ENCODE measurements at regions of chr12 and their contacts with region 1.

Region 1: DNA sequence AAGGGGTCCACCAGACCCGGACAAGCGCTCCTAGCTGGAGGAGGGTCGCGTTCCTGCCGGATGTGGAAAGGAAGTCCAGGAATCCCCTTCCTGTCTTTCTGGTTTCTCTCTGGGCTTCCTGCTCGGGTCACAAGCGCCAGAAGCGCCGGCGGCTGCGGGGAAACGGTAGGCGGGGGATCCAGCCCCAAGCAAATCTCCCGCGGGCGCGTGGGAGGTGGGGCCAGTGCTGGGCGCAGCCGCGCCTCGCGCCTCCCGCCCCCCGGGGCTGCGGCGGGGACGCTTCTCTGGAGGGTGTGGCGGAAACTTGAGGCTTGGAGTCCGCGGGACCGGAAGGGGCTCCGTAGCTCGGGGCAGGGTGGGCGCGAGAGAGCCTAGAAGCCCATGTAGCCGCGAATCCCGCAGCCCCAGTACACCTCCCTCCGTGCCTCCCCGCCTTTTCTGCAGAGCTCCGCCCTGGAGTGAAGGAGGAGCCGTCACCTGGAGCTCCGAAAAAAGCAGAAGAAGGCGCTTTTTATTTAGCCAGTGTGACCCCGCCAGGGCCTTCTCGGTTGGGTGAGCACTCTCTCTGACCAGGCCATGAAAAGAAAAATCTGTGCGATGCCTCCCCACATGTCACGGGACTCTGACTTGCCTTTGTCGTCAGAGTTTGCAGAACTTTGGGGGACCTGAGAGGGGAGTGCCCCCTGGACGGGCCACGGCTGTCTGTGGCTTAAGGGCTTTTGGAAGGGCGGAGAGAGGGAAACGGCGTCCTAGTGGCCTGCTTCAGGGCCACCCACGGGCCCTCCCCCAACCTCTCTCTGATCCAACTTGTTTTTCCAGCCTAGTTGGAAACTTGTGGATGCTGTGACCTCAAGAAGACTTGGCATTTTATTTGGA is 21.4 kb upstream of the CLEC2D start:
- DNase-seq: peak; percentile 79 to 98 (median 90)
- ATAC-seq: peak; percentile 76
- H3K4me3 ChIP-seq: peak overlapping the region; percentile 81 to 85
- H3K4me3 Mint-ChIP-seq: peak overlapping the region; percentile 98
- H3K27ac ChIP-seq: peak overlapping the region; percentile 83 to 93
- H3K27ac Mint-ChIP-seq: peak overlapping the region; percentile 96
- H3K4me1 ChIP-seq: peaks cover 55% of the 10 kb centered on the region
- H3K4me1 Mint-ChIP-seq: peaks cover 61% of the 10 kb centered on the region
- H3K27me3 ChIP-seq: no peaks in the 10 kb centered on the region
- H3K27me3 Mint-ChIP-seq: no peaks in the 10 kb centered on the region
- CTCF ChIP-seq: no peak

Region 2: GRCh38 chr12:9347328-9348127 is 300.5 kb before region 1 on chr12:
- CTCF ChIA-PET with region 1: no interaction called
- POLR2A ChIA-PET with region 1: no interaction called
- intact Hi-C with region 1: no loop called
- DNase-seq: no peak
- ATAC-seq: no peak
- H3K4me3 ChIP-seq: no peak overlapping the region
- H3K4me3 Mint-ChIP-seq: no peak overlapping the region
- H3K27ac ChIP-seq: no peak overlapping the region
- H3K27ac Mint-ChIP-seq: no peak overlapping the region
- H3K4me1 ChIP-seq: peaks cover 13% of the 10 kb centered on the region
- H3K4me1 Mint-ChIP-seq: peaks cover 29% of the 10 kb centered on the region
- H3K27me3 ChIP-seq: no peaks in the 10 kb centered on the region
- H3K27me3 Mint-ChIP-seq: no peaks in the 10 kb centered on the region
- CTCF ChIP-seq: no peak

Region 3: DNA sequence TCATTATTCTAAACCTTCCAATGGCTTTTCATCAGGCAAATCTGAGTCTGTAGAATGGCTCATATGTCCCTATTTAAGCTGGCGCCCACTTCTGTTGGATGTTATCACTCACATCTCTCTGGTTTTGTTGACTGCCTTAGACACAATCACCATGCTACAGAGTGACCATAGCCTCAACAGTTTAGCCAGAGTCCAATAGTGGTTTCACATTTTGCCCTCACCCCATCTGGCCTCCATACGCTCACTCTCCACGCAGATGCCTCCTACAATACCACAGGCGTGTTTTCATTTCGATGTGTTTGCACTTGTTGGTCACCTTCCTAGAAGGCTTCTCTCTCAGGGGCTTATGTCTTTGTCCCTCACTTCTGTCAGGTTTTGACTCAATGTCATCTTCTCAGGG is 43.8 kb before region 1 on chr12:
- CTCF ChIA-PET with region 1: no interaction called
- POLR2A ChIA-PET with region 1: no interaction called
- intact Hi-C with region 1: no loop called
- DNase-seq: peak in 2 of 9 experiments; percentile 9 to 35
- ATAC-seq: no peak
- H3K4me3 ChIP-seq: no peak overlapping the region
- H3K4me3 Mint-ChIP-seq: peak overlapping the region; percentile 49
- H3K27ac ChIP-seq: peak overlapping the region in 1 of 2 experiments; percentile 29
- H3K27ac Mint-ChIP-seq: peak overlapping the region; percentile 42
- H3K4me1 ChIP-seq: peaks cover 12% of the 10 kb centered on the region
- H3K4me1 Mint-ChIP-seq: peaks cover 13% of the 10 kb centered on the region
- H3K27me3 ChIP-seq: no peaks in the 10 kb centered on the region
- H3K27me3 Mint-ChIP-seq: no peaks in the 10 kb centered on the region
- CTCF ChIP-seq: no peak

Region 4: DNA sequence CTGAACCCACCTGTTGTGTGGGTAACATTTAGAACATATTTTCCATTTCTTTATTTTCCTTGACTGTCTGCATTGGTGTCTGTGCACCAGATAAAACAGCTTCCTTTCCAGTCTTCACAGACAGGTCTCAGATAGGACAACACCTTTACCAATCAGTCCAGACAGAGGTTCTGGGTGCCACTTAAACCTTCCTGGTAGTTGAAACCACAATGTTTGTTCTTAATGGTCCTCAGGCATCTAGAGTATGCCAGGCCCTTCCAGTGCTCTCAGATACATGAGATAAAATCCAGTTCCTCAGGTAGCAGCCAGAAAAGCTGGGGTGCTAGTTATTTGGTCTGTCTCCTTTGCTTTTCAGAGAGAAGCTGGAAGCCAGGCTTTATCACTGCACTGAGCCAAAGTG is 14.4 kb after region 1 on chr12:
- CTCF ChIA-PET with region 1: interaction called, 12 read pairs
- POLR2A ChIA-PET with region 1: interaction called, 281 read pairs
- intact Hi-C with region 1: loop called in 1 of 2 experiments (anchors 1 kb)
- DNase-seq: peak in 1 of 9 experiments; percentile 38
- ATAC-seq: peak; percentile 44
- H3K4me3 ChIP-seq: no peak overlapping the region
- H3K4me3 Mint-ChIP-seq: peak overlapping the region; percentile 53
- H3K27ac ChIP-seq: peak overlapping the region in 1 of 2 experiments; percentile 52
- H3K27ac Mint-ChIP-seq: peak overlapping the region; percentile 88
- H3K4me1 ChIP-seq: peaks cover 83% of the 10 kb centered on the region
- H3K4me1 Mint-ChIP-seq: peaks cover 91% of the 10 kb centered on the region
- H3K27me3 ChIP-seq: no peaks in the 10 kb centered on the region
- H3K27me3 Mint-ChIP-seq: no peaks in the 10 kb centered on the region
- CTCF ChIP-seq: no peak

Region 5: GRCh38 chr12:9702255-9702654 is 54.2 kb after region 1 on chr12:
- CTCF ChIA-PET with region 1: interaction called, 21 read pairs
- POLR2A ChIA-PET with region 1: interaction called, 27 read pairs
- intact Hi-C with region 1: no loop called
- DNase-seq: peak in 8 of 9 experiments; percentile 41 to 82 (median 58)
- ATAC-seq: peak; percentile 72
- H3K4me3 ChIP-seq: peak overlapping the region; percentile 20 to 22
- H3K4me3 Mint-ChIP-seq: peak overlapping the region; percentile 56
- H3K27ac ChIP-seq: peak overlapping the region; percentile 47 to 78
- H3K27ac Mint-ChIP-seq: peak overlapping the region; percentile 94
- H3K4me1 ChIP-seq: peaks cover 46% of the 10 kb centered on the region
- H3K4me1 Mint-ChIP-seq: peaks cover 79% of the 10 kb centered on the region
- H3K27me3 ChIP-seq: no peaks in the 10 kb centered on the region
- H3K27me3 Mint-ChIP-seq: no peaks in the 10 kb centered on the region
- CTCF ChIP-seq: no peak

Region 6: DNA sequence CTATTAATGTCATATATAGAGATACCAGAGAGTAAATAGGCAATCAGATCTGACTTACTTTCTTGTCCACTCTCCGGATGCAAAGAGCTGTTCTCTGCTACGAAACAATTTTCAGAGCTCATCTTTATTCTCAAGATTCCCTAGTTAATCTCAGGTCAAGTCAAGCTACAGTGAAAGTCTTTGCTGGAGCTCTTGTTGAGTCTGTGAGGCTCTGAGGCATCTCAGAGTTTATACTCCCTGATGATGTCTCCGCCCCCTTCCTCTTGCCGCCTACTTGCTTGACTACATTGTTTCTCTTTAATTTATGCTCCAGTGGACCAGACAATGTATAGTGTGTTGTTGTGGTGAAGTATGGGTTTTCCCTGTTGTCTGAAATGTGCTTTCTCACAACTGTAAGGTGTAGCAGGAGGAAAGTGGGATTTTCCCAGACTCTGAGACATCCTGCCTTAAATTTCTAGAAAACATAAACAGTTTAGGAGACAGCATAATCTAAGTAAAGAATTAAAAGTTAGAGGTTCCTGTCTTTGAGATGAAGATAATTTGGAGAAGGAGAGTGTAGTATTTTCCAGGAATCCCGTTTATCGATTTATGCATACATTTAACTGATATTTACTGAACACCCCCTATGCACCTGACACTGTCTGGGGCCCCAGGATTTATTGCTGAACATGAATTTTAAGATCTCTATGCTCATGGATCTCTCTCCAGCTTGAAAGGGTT is 112.8 kb after region 1 on chr12 and contains the start of gene CD69:
- CTCF ChIA-PET with region 1: interaction called, 3 read pairs
- POLR2A ChIA-PET with region 1: interaction called, 10 read pairs
- intact Hi-C with region 1: no loop called
- DNase-seq: peak; percentile 60 to 96 (median 77)
- ATAC-seq: peak; percentile 53
- H3K4me3 ChIP-seq: peak within 1 kb of the TSS; percentile 79
- H3K4me3 Mint-ChIP-seq: peak within 1 kb of the TSS; percentile 100
- H3K27ac ChIP-seq: peak within 1 kb of the TSS; percentile 97 to 98
- H3K27ac Mint-ChIP-seq: peak within 1 kb of the TSS; percentile 96
- H3K4me1 ChIP-seq: peaks cover 51% of the 10 kb centered on the region
- H3K4me1 Mint-ChIP-seq: peaks cover 64% of the 10 kb centered on the region
- H3K27me3 ChIP-seq: no peaks in the 10 kb centered on the region
- H3K27me3 Mint-ChIP-seq: no peaks in the 10 kb centered on the region
- CTCF ChIP-seq: no peak
- total RNA-seq, gene CD69: 502 to 504 TPM

Region 7: DNA sequence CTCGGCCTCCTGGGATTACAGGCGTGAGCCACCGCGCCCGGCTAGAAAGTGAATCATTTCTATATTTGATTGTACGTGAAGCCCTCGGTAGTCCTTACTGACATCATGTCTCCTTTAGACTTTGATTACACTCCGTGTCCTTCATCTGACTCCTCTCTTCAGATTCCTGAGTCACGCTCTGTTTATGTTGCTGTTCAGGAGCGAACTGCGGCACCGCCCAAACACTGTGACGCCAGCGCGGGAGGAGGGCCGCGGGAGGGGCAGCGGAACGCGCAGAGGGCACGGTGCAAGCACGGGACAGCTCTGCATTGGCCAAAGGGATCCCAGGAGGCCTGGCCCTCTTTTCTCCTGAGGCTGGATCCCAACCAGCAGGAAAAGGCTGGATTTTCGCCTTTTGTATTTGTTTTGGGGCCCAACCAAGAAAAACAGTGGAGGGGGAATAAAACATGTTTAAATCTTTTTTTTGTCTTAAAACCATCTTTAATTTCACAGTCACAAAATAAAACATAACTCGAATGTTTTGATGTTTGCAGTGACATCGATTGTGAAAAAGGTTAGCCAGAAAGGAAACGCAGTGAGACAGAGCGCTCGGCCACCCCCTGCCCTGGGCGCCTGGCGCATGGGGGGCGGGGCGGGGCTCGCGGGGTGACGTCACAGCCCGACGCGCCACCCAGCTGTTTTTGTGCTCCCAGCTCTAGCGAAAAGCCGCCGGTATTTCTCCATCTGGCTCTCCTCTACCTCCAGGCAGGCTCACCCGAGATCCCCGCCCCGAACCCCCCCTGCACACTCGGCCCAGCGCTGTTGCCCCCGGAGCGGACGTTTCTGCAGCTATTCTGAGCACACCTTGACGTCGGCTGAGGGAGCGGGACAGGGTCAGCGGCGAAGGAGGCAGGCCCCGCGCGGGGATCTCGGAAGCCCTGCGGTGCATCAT is 564.4 kb after region 1 on chr12 and contains the start of gene GABARAPL1:
- CTCF ChIA-PET with region 1: no interaction called
- POLR2A ChIA-PET with region 1: no interaction called
- intact Hi-C with region 1: loop called in 1 of 2 experiments (anchors 10 kb)
- DNase-seq: peak; percentile 76 to 94 (median 88)
- ATAC-seq: peak; percentile 69
- H3K4me3 ChIP-seq: peak within 1 kb of the TSS; percentile 75 to 93
- H3K4me3 Mint-ChIP-seq: peak within 1 kb of the TSS; percentile 91
- H3K27ac ChIP-seq: peak within 1 kb of the TSS; percentile 93 to 98
- H3K27ac Mint-ChIP-seq: peak within 1 kb of the TSS; percentile 97
- H3K4me1 ChIP-seq: peaks cover 19% of the 10 kb centered on the region
- H3K4me1 Mint-ChIP-seq: peaks cover 28% of the 10 kb centered on the region
- H3K27me3 ChIP-seq: no peaks in the 10 kb centered on the region
- H3K27me3 Mint-ChIP-seq: no peaks in the 10 kb centered on the region
- CTCF ChIP-seq: no peak
- total RNA-seq, gene GABARAPL1: 377 to 380 TPM